Activated T-helper 1 cell treated with anti-CD3 and anti-CD28 coated beads, Interleukin-12 subunit alpha, Interleukin-12 subunit beta, Interleukin-2, Interleukin-4 antibody, amounts not matched to agents 30 ng/mL and 10 ng/mL and 1 ng/mL, durations not matched to agents 14 hours and 24 hours and 36 hours (primary cell): ENCODE measurements at regions of chr12 and their contacts with region 1.

Region 1: DNA sequence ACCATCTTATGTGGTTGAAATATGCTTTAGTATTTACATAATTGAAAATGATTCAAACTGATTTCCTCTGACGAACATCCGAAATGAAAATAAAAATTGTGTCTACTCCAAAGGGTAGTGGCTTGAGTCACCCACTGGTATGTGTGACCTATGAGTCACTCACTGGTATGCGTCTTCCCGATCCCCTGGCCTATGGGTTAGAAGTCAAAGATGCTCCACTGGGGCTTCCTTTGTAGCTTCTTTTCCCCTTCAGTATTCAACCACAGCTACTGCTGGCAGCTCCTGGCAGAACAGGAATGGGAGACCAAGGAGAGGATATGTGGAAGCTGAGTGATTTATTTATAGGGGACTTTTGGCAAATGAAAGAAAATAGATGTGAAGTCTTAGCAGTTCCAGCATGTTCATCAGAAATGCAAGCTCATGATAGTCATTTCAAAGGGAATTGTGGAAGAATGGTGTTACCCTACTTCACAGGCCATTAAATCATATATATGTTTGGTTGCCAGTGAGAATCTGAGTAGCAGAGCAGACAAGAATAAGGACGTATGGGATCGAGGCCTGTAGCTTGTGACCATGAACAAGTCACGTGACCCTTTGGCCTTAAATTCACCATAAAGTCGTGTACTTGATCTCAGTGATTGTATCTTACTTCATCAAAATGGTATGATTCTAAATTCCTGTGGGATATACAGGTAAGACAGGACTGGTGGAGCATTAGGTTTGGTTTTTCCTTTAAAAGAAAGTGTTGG is 108.3 kb downstream of the CRADD start:
- DNase-seq: peak; percentile 53
- H3K4me3 Mint-ChIP-seq: peak overlapping the region; percentile 67
- H3K27ac Mint-ChIP-seq: peak overlapping the region; percentile 82
- H3K4me1 Mint-ChIP-seq: peaks cover 51% of the 10 kb centered on the region
- H3K27me3 Mint-ChIP-seq: no peaks in the 10 kb centered on the region

Region 2: GRCh38 chr12:92505254-92506231 is 1279.9 kb before region 1 on chr12:
- intact Hi-C with region 1: loop called (anchors 10 kb)
- DNase-seq: peak; percentile 13
- H3K4me3 Mint-ChIP-seq: peak overlapping the region; percentile 77
- H3K27ac Mint-ChIP-seq: peak overlapping the region; percentile 93
- H3K4me1 Mint-ChIP-seq: peaks cover 47% of the 10 kb centered on the region
- H3K27me3 Mint-ChIP-seq: no peaks in the 10 kb centered on the region

Region 3: GRCh38 chr12:93378373-93379325 is 406.8 kb before region 1 on chr12:
- intact Hi-C with region 1: loop called (anchors 1 kb)
- DNase-seq: peak; percentile 58
- H3K4me3 Mint-ChIP-seq: peak overlapping the region; percentile 100
- H3K27ac Mint-ChIP-seq: peak overlapping the region; percentile 100
- H3K4me1 Mint-ChIP-seq: peaks cover 50% of the 10 kb centered on the region
- H3K27me3 Mint-ChIP-seq: peaks cover 2% of the 10 kb centered on the region

Region 4: GRCh38 chr12:93677195-93678064 is 108.0 kb before region 1 on chr12 and contains the start of gene CRADD:
- intact Hi-C with region 1: loop called (anchors 1 kb)
- DNase-seq: peak; percentile 86
- H3K4me3 Mint-ChIP-seq: peak within 1 kb of the TSS; percentile 85
- H3K27ac Mint-ChIP-seq: peak within 1 kb of the TSS; percentile 96
- H3K4me1 Mint-ChIP-seq: peaks cover 38% of the 10 kb centered on the region
- H3K27me3 Mint-ChIP-seq: no peaks in the 10 kb centered on the region
- total RNA-seq, gene CRADD: 11.2 and 12.3 TPM in 2 replicates

Region 5: GRCh38 chr12:93813972-93814821 is 28.8 kb after region 1 on chr12:
- intact Hi-C with region 1: loop called (anchors 2 kb)
- DNase-seq: no peak
- H3K4me3 Mint-ChIP-seq: no peak overlapping the region
- H3K27ac Mint-ChIP-seq: no peak overlapping the region
- H3K4me1 Mint-ChIP-seq: peaks cover 15% of the 10 kb centered on the region
- H3K27me3 Mint-ChIP-seq: peaks cover 4% of the 10 kb centered on the region

Region 6: DNA sequence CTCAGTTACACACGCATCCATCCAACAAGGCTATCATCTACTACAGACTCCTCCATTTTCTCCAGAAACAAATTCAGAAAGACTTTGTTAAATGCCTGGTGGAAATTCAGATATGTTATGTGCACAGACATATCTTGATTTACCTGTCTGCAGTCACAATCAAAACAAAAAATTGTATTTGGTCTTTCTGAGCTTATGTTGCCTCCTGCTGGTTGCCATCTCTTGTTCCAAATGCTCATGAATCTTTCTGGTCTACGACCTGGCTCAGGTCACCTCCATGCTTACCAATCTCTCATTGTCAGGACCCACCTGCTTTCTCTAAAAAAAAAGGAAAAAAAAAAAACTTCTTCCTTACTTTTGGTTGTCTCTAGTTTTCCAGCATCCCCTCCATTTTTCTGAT is 193.8 kb after region 1 on chr12:
- intact Hi-C with region 1: loop called (anchors 1 kb)
- DNase-seq: peak; percentile 15
- H3K4me3 Mint-ChIP-seq: no peak overlapping the region
- H3K27ac Mint-ChIP-seq: no peak overlapping the region
- H3K4me1 Mint-ChIP-seq: peaks cover 42% of the 10 kb centered on the region
- H3K27me3 Mint-ChIP-seq: peaks cover 10% of the 10 kb centered on the region

Region 7: GRCh38 chr12:94230357-94230905 is 445.0 kb after region 1 on chr12:
- intact Hi-C with region 1: no loop called
- DNase-seq: no peak
- H3K4me3 Mint-ChIP-seq: peak overlapping the region; percentile 12
- H3K27ac Mint-ChIP-seq: no peak overlapping the region
- H3K4me1 Mint-ChIP-seq: peaks cover 12% of the 10 kb centered on the region
- H3K27me3 Mint-ChIP-seq: no peaks in the 10 kb centered on the region